A673 (cell line): ENCODE measurements at regions of chr20 and their contacts with region 1.

Region 1: DNA sequence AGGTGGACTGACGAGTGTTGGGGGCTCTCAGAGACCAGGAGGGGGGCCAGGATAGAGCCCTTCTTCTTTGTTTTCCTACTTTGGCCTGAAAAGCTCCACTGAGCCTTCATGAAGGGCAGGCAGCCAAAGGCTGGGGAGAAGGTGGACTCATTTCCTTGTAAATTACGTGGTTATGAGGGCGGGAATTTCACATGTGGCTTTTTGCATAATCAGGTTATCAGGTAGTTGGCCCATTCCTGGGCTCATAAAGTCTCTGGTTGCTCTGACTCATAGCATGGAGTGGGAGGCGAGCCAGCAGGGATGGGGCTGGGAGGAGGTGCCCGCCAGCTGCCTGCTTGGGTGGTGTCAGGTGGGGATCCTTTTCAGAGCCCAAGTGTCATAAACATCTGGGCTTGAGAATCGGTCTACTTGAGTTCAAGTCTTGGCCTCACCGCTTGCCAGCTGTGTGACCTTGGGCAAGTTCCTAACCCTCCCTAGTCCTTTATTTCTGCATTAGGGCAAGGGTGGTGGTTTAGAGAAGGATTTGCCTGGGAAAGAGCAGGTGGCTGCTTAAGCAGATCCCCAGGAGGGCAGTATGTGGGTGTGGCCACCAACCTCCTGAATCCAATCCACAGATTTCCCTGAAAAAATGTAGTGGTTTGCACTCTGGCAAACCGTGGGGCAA is 26.5 kb upstream of the RNF24 start:
- DNase-seq: no peak
- H3K4me3 ChIP-seq: no peak overlapping the region
- H3K27ac ChIP-seq: no peak overlapping the region
- H3K4me1 ChIP-seq: no peaks in the 10 kb centered on the region
- H3K27me3 ChIP-seq: no peaks in the 10 kb centered on the region
- CTCF ChIP-seq: no peak

Region 2: GRCh38 chr20:3811467-3812258 is 230.2 kb before region 1 on chr20:
- CTCF ChIA-PET with region 1: no interaction called
- POLR2A ChIA-PET with region 1: interaction called, 13 read pairs
- intact Hi-C with region 1: no loop called
- DNase-seq: peak; percentile 98
- H3K4me3 ChIP-seq: peak overlapping the region; percentile 41
- H3K27ac ChIP-seq: peak overlapping the region; percentile 92
- H3K4me1 ChIP-seq: peaks cover 35% of the 10 kb centered on the region
- H3K27me3 ChIP-seq: no peaks in the 10 kb centered on the region
- CTCF ChIP-seq: no peak

Region 3: GRCh38 chr20:4026093-4026601 is 15.7 kb before region 1 on chr20:
- CTCF ChIA-PET with region 1: interaction called, 12 read pairs
- POLR2A ChIA-PET with region 1: no interaction called
- intact Hi-C with region 1: no loop called
- DNase-seq: peak; percentile 73
- H3K4me3 ChIP-seq: no peak overlapping the region
- H3K27ac ChIP-seq: peak overlapping the region; percentile 25
- H3K4me1 ChIP-seq: peaks cover 10% of the 10 kb centered on the region
- H3K27me3 ChIP-seq: no peaks in the 10 kb centered on the region
- CTCF ChIP-seq: peak; percentile 52

Region 4: DNA sequence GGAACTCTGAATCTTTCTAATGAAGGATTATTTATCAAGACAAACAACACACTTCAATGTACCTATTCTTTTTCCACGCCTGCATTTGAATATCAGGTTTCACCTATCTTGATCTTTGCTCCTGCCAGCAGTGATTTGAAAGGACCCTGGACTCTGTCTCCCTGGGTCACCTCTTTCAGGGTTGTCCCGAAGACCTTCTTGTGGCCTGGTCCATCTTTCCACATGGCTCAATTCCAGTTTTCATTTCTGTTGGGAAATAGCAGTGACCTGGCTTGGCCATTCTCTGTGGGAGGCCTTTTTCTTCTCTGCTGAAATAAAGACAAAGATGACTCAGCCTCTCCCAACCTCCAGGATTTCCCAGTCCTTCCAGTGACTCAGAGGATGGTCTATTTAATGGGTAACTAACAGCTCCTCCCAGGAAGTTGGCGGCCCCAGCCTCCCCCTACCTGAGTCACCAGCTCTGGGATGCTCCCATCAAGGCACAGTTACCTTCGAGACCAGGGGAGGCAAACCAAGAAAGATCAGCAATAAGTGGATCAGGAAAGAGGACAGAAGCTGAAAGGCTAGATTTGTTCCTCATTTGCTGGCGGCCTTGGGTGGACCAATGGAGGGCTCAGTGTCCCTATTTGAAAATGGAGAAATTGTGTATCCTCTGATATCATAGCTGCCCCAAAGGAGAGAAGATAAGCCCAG is 93.7 kb after region 1 on chr20:
- CTCF ChIA-PET with region 1: no interaction called
- POLR2A ChIA-PET with region 1: no interaction called
- intact Hi-C with region 1: no loop called
- DNase-seq: peak; percentile 79
- H3K4me3 ChIP-seq: no peak overlapping the region
- H3K27ac ChIP-seq: no peak overlapping the region
- H3K4me1 ChIP-seq: no peaks in the 10 kb centered on the region
- H3K27me3 ChIP-seq: no peaks in the 10 kb centered on the region
- CTCF ChIP-seq: no peak